Naive thymus-derived CD4-positive, alpha-beta T cell (primary cell): ENCODE measurements at regions of chr11 and their contacts with region 1.

Region 1: GRCh38 chr11:126303623-126304456 is at the start of gene DCPS:
- DNase-seq: peak; percentile 78 to 94 (median 86)
- ATAC-seq: peak; percentile 99
- H3K4me3 ChIP-seq: peak within 1 kb of the TSS; percentile 100
- H3K4me3 Mint-ChIP-seq: peak within 1 kb of the TSS; percentile 91 to 99 (median 97)
- H3K27ac ChIP-seq: peak within 1 kb of the TSS; percentile 97
- H3K27ac Mint-ChIP-seq: peak within 1 kb of the TSS; percentile 87 to 99 (median 96)
- H3K4me1 ChIP-seq: peaks cover 18 to 20% of the 10 kb centered on the region in 2 donors
- H3K4me1 Mint-ChIP-seq: peaks cover 19 to 50% (median 45%) of the 10 kb centered on the region in 7 donors
- H3K27me3 ChIP-seq: no peaks in the 10 kb centered on the region
- H3K27me3 Mint-ChIP-seq: no peaks in the 10 kb centered on the region
- total RNA-seq, gene DCPS: 11.0 to 37.2 (median 17.4) TPM

Region 2: DNA sequence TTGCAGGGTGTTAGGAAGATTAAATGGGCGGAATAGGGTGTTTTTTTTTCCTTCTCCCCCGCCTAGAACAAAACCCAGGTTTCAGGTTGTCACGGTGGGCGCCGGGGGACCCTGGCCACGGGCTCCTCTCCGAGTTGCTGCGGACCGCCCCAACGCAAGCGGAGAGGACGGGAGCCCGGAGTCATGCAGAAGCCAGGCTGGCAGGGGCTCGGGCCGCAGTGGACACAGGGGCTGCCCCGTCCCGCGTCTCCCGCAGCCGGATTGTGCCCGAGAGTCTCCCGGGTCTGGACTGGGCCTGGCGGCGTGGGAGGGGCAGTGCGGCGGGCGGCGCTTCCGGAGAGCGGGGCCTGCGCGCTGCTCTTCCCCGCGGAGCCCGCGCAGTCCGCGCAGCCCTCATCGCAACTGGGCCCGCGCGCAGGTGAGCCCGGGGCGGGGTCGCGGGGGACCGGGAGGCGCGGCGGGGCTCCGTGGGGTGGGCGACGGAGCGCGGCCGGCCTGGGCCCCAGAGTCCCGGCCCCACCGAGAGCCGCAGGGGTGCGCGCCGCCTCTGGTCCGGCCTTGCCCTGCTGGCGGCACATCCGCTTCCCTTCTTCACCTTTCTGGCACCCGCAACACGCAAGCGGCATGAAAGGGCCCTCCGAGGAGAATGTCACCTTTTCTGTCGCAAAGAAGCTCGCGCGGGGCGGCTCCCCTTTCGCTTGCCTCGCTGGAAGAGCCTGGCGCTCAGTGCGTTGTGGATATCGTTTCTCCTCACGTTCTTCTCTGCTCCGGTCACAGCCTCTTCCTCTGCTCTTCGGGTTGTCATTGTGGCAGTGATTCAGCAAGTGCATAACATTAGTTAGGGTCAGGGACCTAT is 20.9 kb before region 1 on chr11 and contains the start of gene TIRAP:
- CTCF ChIA-PET with region 1: interaction called, 5 read pairs
- POLR2A ChIA-PET with region 1: interaction called, 29 read pairs
- intact Hi-C with region 1: loop called (anchors 1 kb)
- DNase-seq: peak; percentile 55 to 77 (median 75)
- ATAC-seq: peak; percentile 79
- H3K4me3 ChIP-seq: peak within 1 kb of the TSS; percentile 77
- H3K4me3 Mint-ChIP-seq: peak within 1 kb of the TSS; percentile 88 to 100 (median 98)
- H3K27ac ChIP-seq: peak within 1 kb of the TSS; percentile 86
- H3K27ac Mint-ChIP-seq: peak within 1 kb of the TSS; percentile 93 to 99 (median 97)
- H3K4me1 ChIP-seq: peaks cover 16 to 28% of the 10 kb centered on the region in 2 donors
- H3K4me1 Mint-ChIP-seq: peaks cover 35 to 62% (median 55%) of the 10 kb centered on the region in 7 donors
- H3K27me3 ChIP-seq: no peaks in the 10 kb centered on the region
- H3K27me3 Mint-ChIP-seq: no peaks in the 10 kb centered on the region
- total RNA-seq, gene TIRAP: 12.9 to 21.5 (median 17.9) TPM

Region 3: GRCh38 chr11:126318574-126319373 is 14.9 kb after region 1 on chr11:
- CTCF ChIA-PET with region 1: interaction called, 5 read pairs
- POLR2A ChIA-PET with region 1: interaction called, 14 read pairs
- intact Hi-C with region 1: loop called in 1 of 2 experiments (anchors 2 kb)
- DNase-seq: peak in 2 of 9 donors; percentile 21 to 27
- ATAC-seq: peak; percentile 79
- H3K4me3 ChIP-seq: peak overlapping the region; percentile 38
- H3K4me3 Mint-ChIP-seq: peak overlapping the region; percentile 55 to 77 (median 62)
- H3K27ac ChIP-seq: peak overlapping the region; percentile 62
- H3K27ac Mint-ChIP-seq: peak overlapping the region; percentile 7 to 92 (median 87)
- H3K4me1 ChIP-seq: peaks cover 24 to 25% of the 10 kb centered on the region in 2 donors
- H3K4me1 Mint-ChIP-seq: peaks cover 39 to 50% (median 42%) of the 10 kb centered on the region in 7 donors
- H3K27me3 ChIP-seq: no peaks in the 10 kb centered on the region
- H3K27me3 Mint-ChIP-seq: no peaks in the 10 kb centered on the region

Region 4: DNA sequence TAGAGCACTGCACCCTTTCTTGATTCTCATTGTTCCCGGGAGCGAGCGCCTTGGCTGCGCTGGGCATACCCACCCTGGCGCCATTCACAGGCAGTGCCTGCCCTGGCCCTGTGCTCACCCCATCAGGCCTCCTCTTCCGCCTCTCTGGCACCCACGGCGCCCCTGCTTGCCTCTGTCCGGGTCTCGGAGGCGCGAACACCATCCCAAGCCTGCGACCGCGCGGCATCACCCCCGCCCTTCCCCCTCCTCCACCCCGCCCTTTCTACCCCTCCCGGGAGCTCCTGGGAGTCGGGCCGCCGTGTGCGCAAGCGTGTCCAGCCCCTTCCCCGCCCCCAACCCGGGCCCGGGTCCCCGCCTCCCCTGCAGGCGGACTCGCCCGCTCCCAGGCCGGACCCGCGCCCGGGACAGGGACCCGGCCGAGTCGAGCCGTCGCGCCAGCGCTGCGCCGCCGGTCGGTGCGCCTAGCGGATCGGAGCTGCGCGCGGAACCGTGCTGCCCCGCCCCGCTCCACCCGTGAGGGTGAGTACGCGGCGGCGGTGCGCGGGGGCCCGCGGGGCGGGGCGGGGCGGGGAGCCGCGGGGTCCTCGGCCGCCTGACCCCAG is 51.6 kb after region 1 on chr11 and contains the start of gene ST3GAL4:
- CTCF ChIA-PET with region 1: interaction called, 8 read pairs
- POLR2A ChIA-PET with region 1: no interaction called
- intact Hi-C with region 1: loop called (anchors 1 to 2 kb)
- DNase-seq: peak; percentile 8 to 83 (median 36)
- ATAC-seq: peak; percentile 77
- H3K4me3 ChIP-seq: peak within 1 kb of the TSS; percentile 74
- H3K4me3 Mint-ChIP-seq: peak within 1 kb of the TSS; percentile 77 to 95 (median 88)
- H3K27ac ChIP-seq: peak within 1 kb of the TSS; percentile 51
- H3K27ac Mint-ChIP-seq: peak within 1 kb of the TSS in 8 of 9 donors; percentile 19 to 91 (median 62)
- H3K4me1 ChIP-seq: peaks cover 8 to 14% of the 10 kb centered on the region in 2 donors
- H3K4me1 Mint-ChIP-seq: peaks cover 21 to 46% (median 29%) of the 10 kb centered on the region in 7 donors
- H3K27me3 ChIP-seq: no peaks in the 10 kb centered on the region
- H3K27me3 Mint-ChIP-seq: no peaks in the 10 kb centered on the region
- total RNA-seq, gene ST3GAL4: 2.7 to 13.4 (median 4.7) TPM